Naive thymus-derived CD4-positive, alpha-beta T cell (primary cell): ENCODE measurements at regions of chr6 and their contacts with region 1.

Region 1: GRCh38 chr6:110179401-110180227 is at the start of gene WASF1:
- DNase-seq: peak; percentile 84 to 94 (median 91)
- ATAC-seq: peak; percentile 96
- H3K4me3 ChIP-seq: peak within 1 kb of the TSS; percentile 83
- H3K4me3 Mint-ChIP-seq: peak within 1 kb of the TSS in 6 of 10 donors; percentile 84 to 90 (median 88)
- H3K27ac ChIP-seq: peak within 1 kb of the TSS; percentile 90
- H3K27ac Mint-ChIP-seq: peak within 1 kb of the TSS in 8 of 9 donors; percentile 2 to 87 (median 66)
- H3K4me1 ChIP-seq: peaks cover 17 to 23% of the 10 kb centered on the region in 2 donors
- H3K4me1 Mint-ChIP-seq: peaks cover 4 to 8% (median 5%) of the 10 kb centered on the region in 7 donors
- H3K27me3 ChIP-seq: peaks cover 0 to 7% of the 10 kb centered on the region in 2 donors
- H3K27me3 Mint-ChIP-seq: peaks cover 8 to 21% (median 9%) of the 10 kb centered on the region in 5 donors
- total RNA-seq, gene WASF1: 0.19 to 4.7 (median 0.51) TPM

Region 2: GRCh38 chr6:108558372-108559096 is 1621.1 kb before region 1 on chr6:
- CTCF ChIA-PET with region 1: no interaction called
- POLR2A ChIA-PET with region 1: no interaction called
- intact Hi-C with region 1: loop called (anchors 1 to 5 kb)
- DNase-seq: peak; percentile 91 to 98 (median 97)
- ATAC-seq: peak; percentile 75
- H3K4me3 ChIP-seq: peak overlapping the region; percentile 75
- H3K4me3 Mint-ChIP-seq: peak overlapping the region; percentile 88 to 98 (median 97)
- H3K27ac ChIP-seq: peak overlapping the region; percentile 100
- H3K27ac Mint-ChIP-seq: peak overlapping the region; percentile 87 to 99 (median 97)
- H3K4me1 ChIP-seq: peaks cover 12 to 13% of the 10 kb centered on the region in 2 donors
- H3K4me1 Mint-ChIP-seq: peaks cover 16 to 28% (median 20%) of the 10 kb centered on the region in 7 donors
- H3K27me3 ChIP-seq: no peaks in the 10 kb centered on the region
- H3K27me3 Mint-ChIP-seq: peaks cover 0 to 55% (median 6%) of the 10 kb centered on the region in 5 donors

Region 3: GRCh38 chr6:109526905-109527628 is 652.5 kb before region 1 on chr6:
- CTCF ChIA-PET with region 1: no interaction called
- POLR2A ChIA-PET with region 1: no interaction called
- intact Hi-C with region 1: loop called in 1 of 2 experiments (anchors 10 kb)
- DNase-seq: peak; percentile 7 to 70 (median 59)
- ATAC-seq: peak; percentile 79
- H3K4me3 ChIP-seq: no peak overlapping the region
- H3K4me3 Mint-ChIP-seq: no peak overlapping the region
- H3K27ac ChIP-seq: no peak overlapping the region
- H3K27ac Mint-ChIP-seq: peak overlapping the region in 1 of 9 donors; percentile 86
- H3K4me1 ChIP-seq: no peaks in the 10 kb centered on the region
- H3K4me1 Mint-ChIP-seq: peaks cover 0 to 4% (median 0%) of the 10 kb centered on the region in 7 donors
- H3K27me3 ChIP-seq: no peaks in the 10 kb centered on the region
- H3K27me3 Mint-ChIP-seq: peaks cover 0 to 6% (median 0%) of the 10 kb centered on the region in 5 donors

Region 4: GRCh38 chr6:110217266-110217665 is 37.7 kb after region 1 on chr6:
- CTCF ChIA-PET with region 1: no interaction called
- POLR2A ChIA-PET with region 1: no interaction called
- intact Hi-C with region 1: loop called in 1 of 2 experiments (anchors 5 kb)
- DNase-seq: no peak
- ATAC-seq: no peak
- H3K4me3 ChIP-seq: no peak overlapping the region
- H3K4me3 Mint-ChIP-seq: no peak overlapping the region
- H3K27ac ChIP-seq: no peak overlapping the region
- H3K27ac Mint-ChIP-seq: no peak overlapping the region
- H3K4me1 ChIP-seq: no peaks in the 10 kb centered on the region
- H3K4me1 Mint-ChIP-seq: no peaks in the 10 kb centered on the region
- H3K27me3 ChIP-seq: no peaks in the 10 kb centered on the region
- H3K27me3 Mint-ChIP-seq: no peaks in the 10 kb centered on the region

Region 5: DNA sequence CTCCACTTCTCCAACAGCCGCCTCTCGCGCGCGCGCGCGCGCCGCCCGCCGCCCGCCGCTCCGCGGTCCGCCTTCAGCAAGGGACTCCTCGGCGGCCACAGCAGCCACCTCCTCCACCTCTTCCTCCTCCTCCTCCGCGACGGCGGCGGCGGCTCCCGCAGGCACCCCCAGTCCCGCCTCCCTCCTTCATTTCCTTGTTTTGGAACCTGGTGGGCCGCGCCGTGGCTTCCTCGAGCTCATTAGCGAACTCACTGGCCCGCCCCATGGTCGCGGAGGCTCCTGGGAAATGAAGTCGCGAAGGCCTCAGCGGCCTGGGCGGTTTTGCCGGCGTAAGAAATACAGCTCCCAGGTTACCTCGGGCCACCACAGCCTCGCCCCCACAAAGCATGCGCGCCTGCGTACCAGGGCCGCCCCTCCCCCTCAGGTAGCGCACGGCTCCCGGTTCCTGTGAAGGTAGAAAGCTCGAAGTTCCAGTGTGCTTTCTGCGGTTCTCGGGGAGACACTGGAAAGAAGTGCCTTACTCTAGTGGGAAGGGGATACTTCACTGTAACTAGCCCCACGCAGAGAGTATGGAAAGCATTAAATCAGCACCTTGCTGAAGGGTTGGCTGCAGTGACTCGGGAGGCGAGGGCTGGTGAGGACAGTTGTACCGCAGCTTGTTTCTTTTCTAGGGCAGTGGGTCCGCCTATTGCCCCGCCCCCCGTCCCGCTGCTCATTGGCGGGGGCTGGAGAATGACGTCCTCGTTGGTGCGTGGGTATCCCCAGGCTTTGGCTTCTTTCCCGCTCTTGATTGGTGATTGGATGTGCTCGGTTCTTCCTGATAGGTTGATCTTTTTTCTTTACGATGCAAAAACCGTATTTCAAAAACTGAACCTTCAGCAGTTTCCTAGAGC is 635.8 kb after region 1 on chr6 and contains the start of gene CDK19:
- CTCF ChIA-PET with region 1: interaction called, 3 read pairs
- POLR2A ChIA-PET with region 1: interaction called, 3 read pairs
- intact Hi-C with region 1: loop called (anchors 1 kb)
- DNase-seq: peak; percentile 94 to 99 (median 99)
- ATAC-seq: peak; percentile 87
- H3K4me3 ChIP-seq: peak within 1 kb of the TSS; percentile 97
- H3K4me3 Mint-ChIP-seq: peak within 1 kb of the TSS; percentile 94 to 100 (median 98)
- H3K27ac ChIP-seq: peak within 1 kb of the TSS; percentile 89
- H3K27ac Mint-ChIP-seq: peak within 1 kb of the TSS; percentile 89 to 100 (median 99)
- H3K4me1 ChIP-seq: peaks cover 11 to 15% of the 10 kb centered on the region in 2 donors
- H3K4me1 Mint-ChIP-seq: peaks cover 14 to 46% (median 26%) of the 10 kb centered on the region in 7 donors
- H3K27me3 ChIP-seq: no peaks in the 10 kb centered on the region
- H3K27me3 Mint-ChIP-seq: no peaks in the 10 kb centered on the region
- total RNA-seq, gene CDK19: 11.3 to 24.4 (median 21.0) TPM

Region 6: GRCh38 chr6:112087136-112087911 is 1907.7 kb after region 1 on chr6 and contains the starts of genes FAM229B and TUBE1:
- CTCF ChIA-PET with region 1: no interaction called
- POLR2A ChIA-PET with region 1: no interaction called
- intact Hi-C with region 1: loop called (anchors 10 kb)
- DNase-seq: peak; percentile 70 to 96 (median 90)
- ATAC-seq: peak; percentile 98
- H3K4me3 ChIP-seq: peak within 1 kb of the TSS; percentile 64
- H3K4me3 Mint-ChIP-seq: no peak within 1 kb of the TSS
- H3K27ac ChIP-seq: peak within 1 kb of the TSS; percentile 87
- H3K27ac Mint-ChIP-seq: peak within 1 kb of the TSS in 1 of 9 donors; percentile 65
- H3K4me1 ChIP-seq: peaks cover 0 to 7% of the 10 kb centered on the region in 2 donors
- H3K4me1 Mint-ChIP-seq: peaks cover 0 to 18% (median 10%) of the 10 kb centered on the region in 7 donors
- H3K27me3 ChIP-seq: peaks cover 0 to 3% of the 10 kb centered on the region in 2 donors
- H3K27me3 Mint-ChIP-seq: peaks cover 0 to 37% (median 6%) of the 10 kb centered on the region in 5 donors
- total RNA-seq, gene FAM229B: 0.70 to 5.8 (median 2.0) TPM
- total RNA-seq, gene TUBE1: 19.3 to 50.0 (median 35.1) TPM